ENCODE measurements at regions of chr1 and their contacts with region 1.

Region 1: GRCh38 chr1:151059078-151059907 is at the start of gene CDC42SE1:
- DNase-seq: peak; percentile 84 to 94
- ATAC-seq: peak; percentile 56 to 83 (median 67)
- H3K4me3 ChIP-seq: peak within 1 kb of the TSS; percentile 95
- H3K4me3 Mint-ChIP-seq: peak within 1 kb of the TSS; percentile 92
- H3K27ac ChIP-seq: peak within 1 kb of the TSS; percentile 89
- H3K27ac Mint-ChIP-seq: peak within 1 kb of the TSS; percentile 98 to 99
- H3K4me1 ChIP-seq: peaks cover 41% of the 10 kb centered on the region
- H3K4me1 Mint-ChIP-seq: peaks cover 65 to 69% of the 10 kb centered on the region in 2 donors
- H3K27me3 ChIP-seq: no peaks in the 10 kb centered on the region
- H3K27me3 Mint-ChIP-seq: no peaks in the 10 kb centered on the region
- CTCF ChIP-seq: peak; percentile 78
- total RNA-seq, gene CDC42SE1: 555 to 792 (median 752) TPM

Region 2: DNA sequence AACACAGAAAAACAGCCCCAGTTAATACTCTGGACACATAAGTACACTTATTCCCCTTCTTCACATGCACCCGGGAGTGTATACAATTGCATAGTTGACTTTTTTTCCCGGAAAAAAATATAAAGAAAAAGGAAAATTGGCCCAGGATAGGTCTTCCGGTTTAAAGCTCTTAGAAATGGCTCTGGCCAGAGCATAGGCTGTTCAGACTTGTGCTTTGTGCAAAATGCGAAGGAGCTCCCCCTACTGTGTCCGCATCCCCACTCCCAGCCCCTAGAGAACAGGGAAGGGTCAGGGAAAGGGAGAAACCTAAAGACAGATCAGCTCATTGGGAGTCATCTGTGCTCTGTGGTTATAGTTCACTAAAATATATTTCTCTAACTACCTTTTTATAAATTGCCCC is 1117.1 kb before region 1 on chr1:
- intact Hi-C with region 1: no loop called
- DNase-seq: no peak
- ATAC-seq: no peak
- H3K4me3 ChIP-seq: no peak overlapping the region
- H3K4me3 Mint-ChIP-seq: no peak overlapping the region
- H3K27ac ChIP-seq: no peak overlapping the region
- H3K27ac Mint-ChIP-seq: no peak overlapping the region
- H3K4me1 ChIP-seq: peaks cover 7% of the 10 kb centered on the region
- H3K4me1 Mint-ChIP-seq: peaks cover 0 to 8% of the 10 kb centered on the region in 2 donors
- H3K27me3 ChIP-seq: no peaks in the 10 kb centered on the region
- H3K27me3 Mint-ChIP-seq: no peaks in the 10 kb centered on the region
- CTCF ChIP-seq: no peak

Region 3: DNA sequence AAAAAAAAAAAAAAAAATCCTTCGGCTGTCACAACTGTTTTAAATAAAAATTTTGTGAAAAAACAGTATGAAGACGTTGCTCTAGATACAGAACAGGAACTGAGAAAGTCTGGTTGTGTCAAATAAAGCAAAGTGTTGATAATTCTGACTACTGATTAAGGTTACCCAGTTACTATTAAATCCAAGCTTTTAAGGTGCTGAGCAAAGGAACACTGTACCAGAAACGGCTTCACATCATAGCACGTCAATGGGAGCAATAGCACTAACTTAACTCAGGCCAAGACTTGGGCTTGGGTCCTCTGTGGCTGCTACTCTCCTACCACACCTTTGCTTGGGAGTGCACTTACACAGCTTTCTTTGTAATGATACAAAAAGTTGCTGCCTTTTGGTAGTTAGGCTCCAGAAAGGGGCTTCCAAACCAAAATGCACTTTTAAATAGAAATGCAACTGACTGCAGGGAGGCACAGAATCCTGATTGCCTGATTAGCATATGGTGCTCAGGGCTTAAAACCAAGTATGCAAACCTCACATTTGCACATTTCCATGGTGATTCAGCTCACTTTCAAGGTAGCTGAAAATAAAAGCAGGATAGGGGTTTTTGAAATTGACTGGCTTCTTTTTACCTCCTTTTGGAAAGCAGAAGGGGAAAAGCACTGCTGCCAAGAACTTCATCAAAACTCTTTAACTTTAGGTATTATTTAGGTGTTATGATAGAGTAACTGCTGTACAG is 486.2 kb before region 1 on chr1:
- intact Hi-C with region 1: loop called (anchors 5 kb)
- DNase-seq: peak in 1 of 2 donors; percentile 42
- ATAC-seq: no peak
- H3K4me3 ChIP-seq: no peak overlapping the region
- H3K4me3 Mint-ChIP-seq: peak overlapping the region; percentile 57
- H3K27ac ChIP-seq: peak overlapping the region; percentile 53
- H3K27ac Mint-ChIP-seq: peak overlapping the region; percentile 96 to 99
- H3K4me1 ChIP-seq: peaks cover 68% of the 10 kb centered on the region
- H3K4me1 Mint-ChIP-seq: peaks cover 74 to 81% of the 10 kb centered on the region in 2 donors
- H3K27me3 ChIP-seq: no peaks in the 10 kb centered on the region
- H3K27me3 Mint-ChIP-seq: no peaks in the 10 kb centered on the region
- CTCF ChIP-seq: no peak

Region 4: GRCh38 chr1:151008190-151008860 is 51.0 kb before region 1 on chr1 and contains the start of gene PRUNE1:
- intact Hi-C with region 1: loop called (anchors 1 kb)
- DNase-seq: peak; percentile 96 to 99
- ATAC-seq: peak; percentile 87 to 97 (median 93)
- H3K4me3 ChIP-seq: peak within 1 kb of the TSS; percentile 73
- H3K4me3 Mint-ChIP-seq: peak within 1 kb of the TSS; percentile 94
- H3K27ac ChIP-seq: peak within 1 kb of the TSS; percentile 95
- H3K27ac Mint-ChIP-seq: peak within 1 kb of the TSS; percentile 95 to 96
- H3K4me1 ChIP-seq: peaks cover 50% of the 10 kb centered on the region
- H3K4me1 Mint-ChIP-seq: peaks cover 53 to 61% of the 10 kb centered on the region in 2 donors
- H3K27me3 ChIP-seq: no peaks in the 10 kb centered on the region
- H3K27me3 Mint-ChIP-seq: no peaks in the 10 kb centered on the region
- CTCF ChIP-seq: no peak
- total RNA-seq, gene PRUNE1: 11.4 to 14.1 (median 13.5) TPM

Region 5: GRCh38 chr1:151047925-151048645 is 11.2 kb before region 1 on chr1:
- intact Hi-C with region 1: loop called (anchors 1 kb)
- DNase-seq: peak; percentile 54 to 84
- ATAC-seq: peak; percentile 66 to 86 (median 70)
- H3K4me3 ChIP-seq: peak overlapping the region; percentile 93
- H3K4me3 Mint-ChIP-seq: peak overlapping the region; percentile 96
- H3K27ac ChIP-seq: peak overlapping the region; percentile 87
- H3K27ac Mint-ChIP-seq: peak overlapping the region; percentile 98 to 99
- H3K4me1 ChIP-seq: peaks cover 25% of the 10 kb centered on the region
- H3K4me1 Mint-ChIP-seq: peaks cover 56 to 57% of the 10 kb centered on the region in 2 donors
- H3K27me3 ChIP-seq: no peaks in the 10 kb centered on the region
- H3K27me3 Mint-ChIP-seq: no peaks in the 10 kb centered on the region
- CTCF ChIP-seq: peak; percentile 50

Region 6: GRCh38 chr1:151070474-151071276 is 11.4 kb after region 1 on chr1 and contains the start of gene GABPB2:
- intact Hi-C with region 1: loop called (anchors 1 kb)
- DNase-seq: peak; percentile 86 to 95
- ATAC-seq: peak; percentile 84 to 97 (median 87)
- H3K4me3 ChIP-seq: peak within 1 kb of the TSS; percentile 81
- H3K4me3 Mint-ChIP-seq: peak within 1 kb of the TSS; percentile 98
- H3K27ac ChIP-seq: peak within 1 kb of the TSS; percentile 96
- H3K27ac Mint-ChIP-seq: peak within 1 kb of the TSS; percentile 99 to 100
- H3K4me1 ChIP-seq: peaks cover 16% of the 10 kb centered on the region
- H3K4me1 Mint-ChIP-seq: peaks cover 11 to 18% of the 10 kb centered on the region in 2 donors
- H3K27me3 ChIP-seq: no peaks in the 10 kb centered on the region
- H3K27me3 Mint-ChIP-seq: no peaks in the 10 kb centered on the region
- CTCF ChIP-seq: peak; percentile 88
- total RNA-seq, gene GABPB2: 27.4 to 34.0 (median 30.6) TPM

Measured in natural killer cell (primary cell).